ENCODE measurements at regions of chr16 and their contacts with region 1.

Region 1: DNA sequence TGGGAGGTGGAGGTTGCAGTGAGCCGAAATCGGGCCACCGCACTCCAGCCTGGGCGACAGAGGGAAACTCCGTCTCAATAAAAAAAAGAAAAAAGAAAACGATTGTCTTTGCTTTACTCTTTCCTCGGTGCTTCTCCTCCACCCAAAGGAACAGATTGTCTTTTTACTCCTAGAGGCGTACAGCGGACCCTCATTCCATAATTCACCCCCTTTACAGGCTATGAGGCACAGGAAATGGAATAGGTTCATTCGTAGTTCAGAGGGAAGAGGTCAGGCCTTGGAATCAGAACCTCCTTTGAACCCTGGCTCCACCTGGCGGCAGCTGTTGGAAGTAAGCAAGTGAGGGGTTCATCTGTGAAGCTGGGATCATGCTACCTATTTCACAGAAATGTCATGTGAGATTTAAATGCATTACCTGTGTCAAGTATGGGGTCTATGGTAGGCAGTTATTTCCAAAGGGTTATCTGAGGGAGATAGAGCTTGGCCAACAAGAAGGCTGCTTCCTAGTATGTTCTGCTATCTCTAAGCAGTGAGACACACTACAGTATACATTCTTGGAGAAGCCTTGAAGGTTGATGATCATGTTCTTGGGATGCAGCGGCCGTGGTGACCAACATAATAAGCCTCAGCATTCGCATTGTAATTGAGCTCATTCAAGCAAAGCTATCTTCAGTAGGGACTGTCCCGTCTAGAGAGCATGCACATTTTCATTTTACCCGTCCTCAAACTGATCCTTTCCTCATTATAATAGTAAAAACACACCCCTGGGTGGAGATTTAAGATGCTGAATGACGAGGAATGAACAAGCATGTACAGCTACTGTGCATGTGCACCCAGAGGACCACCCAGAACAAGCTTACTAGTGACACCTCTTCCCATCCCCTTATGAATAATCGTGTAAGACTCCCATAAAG is 18.7 kb upstream of the ZNF689 start:
- DNase-seq: peak; percentile 64 to 89 (median 80)
- ATAC-seq: peak; percentile 97
- H3K4me3 ChIP-seq: peak overlapping the region; percentile 51
- H3K4me3 Mint-ChIP-seq: peak overlapping the region; percentile 58 to 85 (median 72)
- H3K27ac ChIP-seq: peak overlapping the region; percentile 60
- H3K27ac Mint-ChIP-seq: peak overlapping the region in 8 of 9 donors; percentile 58 to 89 (median 80)
- H3K4me1 ChIP-seq: peaks cover 0 to 3% of the 10 kb centered on the region in 2 donors
- H3K4me1 Mint-ChIP-seq: peaks cover 4 to 12% (median 8%) of the 10 kb centered on the region in 7 donors
- H3K27me3 ChIP-seq: no peaks in the 10 kb centered on the region
- H3K27me3 Mint-ChIP-seq: peaks cover 0 to under 1% (median 0%) of the 10 kb centered on the region in 5 donors

Region 2: GRCh38 chr16:30041846-30042267 is 587.0 kb before region 1 on chr16:
- CTCF ChIA-PET with region 1: no interaction called
- POLR2A ChIA-PET with region 1: no interaction called
- intact Hi-C with region 1: loop called in 1 of 2 experiments (anchors 2 kb)
- DNase-seq: peak in 3 of 9 donors; percentile 40 to 44 (median 42)
- ATAC-seq: no peak
- H3K4me3 ChIP-seq: no peak overlapping the region
- H3K4me3 Mint-ChIP-seq: no peak overlapping the region
- H3K27ac ChIP-seq: no peak overlapping the region
- H3K27ac Mint-ChIP-seq: no peak overlapping the region
- H3K4me1 ChIP-seq: no peaks in the 10 kb centered on the region
- H3K4me1 Mint-ChIP-seq: peaks cover 0 to 7% (median 0%) of the 10 kb centered on the region in 7 donors
- H3K27me3 ChIP-seq: no peaks in the 10 kb centered on the region
- H3K27me3 Mint-ChIP-seq: peaks cover 0 to 21% (median 0%) of the 10 kb centered on the region in 5 donors

Region 3: DNA sequence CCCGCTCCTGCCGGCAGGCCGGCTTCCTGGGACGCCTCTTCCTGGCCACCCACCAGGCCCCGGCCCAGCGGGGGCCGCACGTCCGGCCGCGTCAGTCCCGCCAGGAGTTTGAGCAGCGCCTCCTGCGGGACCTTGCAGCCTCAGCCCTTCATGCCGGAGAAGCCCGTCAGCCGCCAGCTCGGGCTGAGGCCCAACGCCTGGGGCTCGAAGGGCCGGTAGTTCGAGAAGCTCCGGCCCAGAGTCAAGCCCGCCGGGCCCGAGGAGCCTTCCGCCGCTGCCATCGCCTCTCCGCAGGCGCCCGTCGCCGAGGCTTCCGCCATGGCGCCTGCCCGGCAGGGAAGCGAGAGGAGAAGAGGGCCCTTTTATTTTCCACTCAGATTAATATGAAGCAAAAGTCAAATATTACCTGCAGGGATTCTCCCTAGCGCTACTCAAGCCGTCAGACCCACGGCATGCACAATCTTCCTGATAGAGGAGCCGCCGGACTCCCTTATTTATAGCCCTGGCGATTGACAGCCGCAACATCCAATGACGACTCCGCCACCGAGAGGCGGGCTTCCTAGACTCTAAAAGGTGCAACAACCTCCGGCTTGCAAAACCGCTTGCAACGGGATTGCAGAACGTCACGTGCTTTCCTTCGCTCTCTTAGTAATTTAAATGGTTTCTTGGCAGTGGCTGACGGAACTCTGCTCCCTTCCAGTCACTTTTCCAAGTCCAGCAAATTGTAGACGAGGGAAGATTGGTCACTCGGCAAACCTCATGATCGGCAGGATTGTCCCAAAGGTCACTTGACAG is 183.3 kb before region 1 on chr16 and contains the start of gene SEPHS2:
- CTCF ChIA-PET with region 1: no interaction called
- POLR2A ChIA-PET with region 1: no interaction called
- intact Hi-C with region 1: loop called (anchors 1 to 5 kb)
- DNase-seq: peak; percentile 84 to 96 (median 94)
- ATAC-seq: peak; percentile 96
- H3K4me3 ChIP-seq: peak within 1 kb of the TSS; percentile 97
- H3K4me3 Mint-ChIP-seq: peak within 1 kb of the TSS; percentile 85 to 97 (median 95)
- H3K27ac ChIP-seq: peak within 1 kb of the TSS; percentile 92
- H3K27ac Mint-ChIP-seq: peak within 1 kb of the TSS; percentile 90 to 98 (median 96)
- H3K4me1 ChIP-seq: peaks cover 26 to 37% of the 10 kb centered on the region in 2 donors
- H3K4me1 Mint-ChIP-seq: peaks cover 30 to 47% (median 41%) of the 10 kb centered on the region in 7 donors
- H3K27me3 ChIP-seq: no peaks in the 10 kb centered on the region
- H3K27me3 Mint-ChIP-seq: no peaks in the 10 kb centered on the region
- total RNA-seq, gene SEPHS2: 20.9 to 69.6 (median 47.1) TPM

Region 4: GRCh38 chr16:30557957-30558788 is 70.7 kb before region 1 on chr16 and contains the start of gene ZNF764:
- CTCF ChIA-PET with region 1: no interaction called
- POLR2A ChIA-PET with region 1: interaction called, 5 read pairs
- intact Hi-C with region 1: loop called in 1 of 2 experiments (anchors 1 kb)
- DNase-seq: peak; percentile 79 to 95 (median 91)
- ATAC-seq: peak; percentile 95
- H3K4me3 ChIP-seq: peak within 1 kb of the TSS; percentile 92
- H3K4me3 Mint-ChIP-seq: peak within 1 kb of the TSS; percentile 83 to 92 (median 90)
- H3K27ac ChIP-seq: peak within 1 kb of the TSS; percentile 99
- H3K27ac Mint-ChIP-seq: peak within 1 kb of the TSS; percentile 87 to 94 (median 92)
- H3K4me1 ChIP-seq: peaks cover 12 to 15% of the 10 kb centered on the region in 2 donors
- H3K4me1 Mint-ChIP-seq: peaks cover 33 to 58% (median 43%) of the 10 kb centered on the region in 7 donors
- H3K27me3 ChIP-seq: no peaks in the 10 kb centered on the region
- H3K27me3 Mint-ChIP-seq: no peaks in the 10 kb centered on the region
- total RNA-seq, gene ZNF764: 11.9 to 20.9 (median 19.3) TPM

Region 5: DNA sequence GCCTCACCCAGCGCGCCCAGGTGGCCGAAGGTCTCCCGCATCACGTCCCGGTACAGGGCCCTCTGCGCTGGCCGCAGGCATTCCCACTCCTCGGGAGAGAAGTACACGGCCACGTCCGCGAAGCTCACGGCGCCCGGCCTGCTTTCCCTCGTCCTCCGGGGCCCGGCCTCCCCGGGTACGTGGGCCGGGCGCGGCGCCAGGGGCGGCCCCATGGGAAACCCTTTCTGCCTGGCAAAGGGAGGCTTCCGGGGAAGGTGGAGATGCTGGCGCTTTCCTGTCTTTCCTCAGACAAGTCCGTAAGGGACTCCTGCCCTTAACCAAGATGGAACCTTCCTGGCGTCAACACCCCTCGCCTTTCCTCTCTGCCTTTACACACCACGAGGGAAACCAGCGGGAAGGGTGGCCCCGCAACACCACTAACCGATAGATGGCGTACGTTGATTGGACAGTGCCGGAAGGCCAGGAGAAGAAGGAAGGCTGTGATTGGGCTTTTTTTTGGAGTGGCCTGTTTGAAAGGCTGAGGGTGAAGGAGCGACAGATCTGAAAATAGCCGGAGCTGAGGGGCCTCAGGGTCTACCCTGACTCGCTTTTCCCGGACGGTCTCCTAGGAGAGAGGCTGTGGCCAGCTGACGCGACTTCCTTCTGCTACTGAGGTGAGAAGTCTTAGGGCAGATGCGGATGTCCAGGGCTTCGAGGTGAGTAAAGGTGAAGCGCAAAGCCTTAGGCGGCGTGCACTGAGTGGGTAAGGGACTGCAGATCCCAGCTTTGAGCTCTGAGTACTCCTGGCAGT is 43.3 kb before region 1 on chr16 and contains the start of gene ZNF785:
- CTCF ChIA-PET with region 1: interaction called, 5 read pairs
- POLR2A ChIA-PET with region 1: interaction called, 4 read pairs
- intact Hi-C with region 1: loop called in 1 of 2 experiments (anchors 1 kb)
- DNase-seq: peak; percentile 72 to 95 (median 93)
- ATAC-seq: peak; percentile 100
- H3K4me3 ChIP-seq: peak within 1 kb of the TSS; percentile 77
- H3K4me3 Mint-ChIP-seq: peak within 1 kb of the TSS; percentile 85 to 98 (median 94)
- H3K27ac ChIP-seq: peak within 1 kb of the TSS; percentile 81
- H3K27ac Mint-ChIP-seq: peak within 1 kb of the TSS; percentile 89 to 95 (median 92)
- H3K4me1 ChIP-seq: peaks cover 8 to 12% of the 10 kb centered on the region in 2 donors
- H3K4me1 Mint-ChIP-seq: peaks cover 6 to 44% (median 32%) of the 10 kb centered on the region in 7 donors
- H3K27me3 ChIP-seq: no peaks in the 10 kb centered on the region
- H3K27me3 Mint-ChIP-seq: peaks cover 0 to 2% (median 0%) of the 10 kb centered on the region in 5 donors
- total RNA-seq, gene ZNF785: 10.2 to 37.1 (median 21.4) TPM

Region 6: GRCh38 chr16:30609926-30610839 is 18.7 kb before region 1 on chr16 and contains the start of gene ZNF689:
- CTCF ChIA-PET with region 1: interaction called, 6 read pairs
- POLR2A ChIA-PET with region 1: interaction called, 10 read pairs
- intact Hi-C with region 1: loop called (anchors 1 kb)
- DNase-seq: peak; percentile 90 to 98 (median 93)
- ATAC-seq: peak; percentile 96
- H3K4me3 ChIP-seq: peak within 1 kb of the TSS; percentile 98
- H3K4me3 Mint-ChIP-seq: peak within 1 kb of the TSS; percentile 89 to 97 (median 94)
- H3K27ac ChIP-seq: peak within 1 kb of the TSS; percentile 94
- H3K27ac Mint-ChIP-seq: peak within 1 kb of the TSS; percentile 94 to 99 (median 97)
- H3K4me1 ChIP-seq: peaks cover 8 to 11% of the 10 kb centered on the region in 2 donors
- H3K4me1 Mint-ChIP-seq: peaks cover 5 to 26% (median 22%) of the 10 kb centered on the region in 7 donors
- H3K27me3 ChIP-seq: no peaks in the 10 kb centered on the region
- H3K27me3 Mint-ChIP-seq: no peaks in the 10 kb centered on the region
- total RNA-seq, gene ZNF689: 6.8 to 14.6 (median 12.4) TPM

Region 7: GRCh38 chr16:30747799-30748634 is 119.1 kb after region 1 on chr16 and contains the start of gene PHKG2:
- CTCF ChIA-PET with region 1: no interaction called
- POLR2A ChIA-PET with region 1: no interaction called
- intact Hi-C with region 1: no loop called
- DNase-seq: peak; percentile 82 to 95 (median 92)
- ATAC-seq: peak; percentile 99
- H3K4me3 ChIP-seq: peak within 1 kb of the TSS; percentile 51
- H3K4me3 Mint-ChIP-seq: peak within 1 kb of the TSS; percentile 78 to 98 (median 90)
- H3K27ac ChIP-seq: peak within 1 kb of the TSS; percentile 75
- H3K27ac Mint-ChIP-seq: peak within 1 kb of the TSS; percentile 82 to 95 (median 90)
- H3K4me1 ChIP-seq: peaks cover 4 to 6% of the 10 kb centered on the region in 2 donors
- H3K4me1 Mint-ChIP-seq: peaks cover 18 to 29% (median 27%) of the 10 kb centered on the region in 7 donors
- H3K27me3 ChIP-seq: no peaks in the 10 kb centered on the region
- H3K27me3 Mint-ChIP-seq: no peaks in the 10 kb centered on the region
- total RNA-seq, gene PHKG2: 33.2 to 57.8 (median 46.7) TPM

Region 8: DNA sequence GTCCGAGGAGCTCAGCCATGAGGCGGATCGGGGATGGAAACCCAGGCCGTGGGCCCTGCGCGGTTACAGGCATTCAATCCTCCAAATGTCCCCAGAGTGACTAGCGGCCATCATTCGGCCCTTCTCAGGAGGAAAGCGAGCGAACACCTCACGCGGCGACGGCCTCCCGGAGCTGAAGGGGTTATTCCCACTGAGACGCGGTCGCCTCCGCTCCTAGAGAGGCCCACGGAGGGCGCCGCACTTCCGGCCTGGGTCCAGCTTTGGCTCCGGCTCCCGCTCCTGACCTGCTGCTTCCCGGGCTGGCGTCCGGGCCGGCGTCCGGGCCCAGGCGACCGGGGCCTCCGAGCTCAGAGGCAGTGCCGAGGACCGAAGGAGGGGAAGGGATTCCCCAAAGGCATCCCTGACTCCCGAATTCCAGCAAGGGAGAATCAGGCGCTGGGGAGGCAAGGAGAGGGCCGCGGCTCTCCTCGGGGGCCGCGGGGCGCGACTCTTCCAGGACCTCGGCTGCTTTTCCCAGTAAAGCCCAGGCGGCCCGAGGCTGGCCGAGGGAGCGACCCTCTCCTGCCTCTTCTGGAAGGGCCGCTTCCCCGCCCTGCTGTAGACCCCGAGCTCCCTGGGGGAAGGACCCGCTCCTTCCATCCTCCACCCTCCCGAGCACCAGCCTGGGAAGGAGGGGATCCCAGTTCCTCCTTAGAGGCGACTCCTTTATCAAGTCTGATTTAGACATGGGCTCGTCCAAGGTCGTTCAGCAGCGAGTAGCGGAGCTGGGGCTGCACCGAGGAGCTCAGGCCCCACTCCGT is 176.7 kb after region 1 on chr16:
- CTCF ChIA-PET with region 1: no interaction called
- POLR2A ChIA-PET with region 1: no interaction called
- intact Hi-C with region 1: no loop called
- DNase-seq: peak; percentile 32 to 63 (median 52)
- ATAC-seq: peak; percentile 92
- H3K4me3 ChIP-seq: peak overlapping the region; percentile 86
- H3K4me3 Mint-ChIP-seq: peak overlapping the region; percentile 79 to 99 (median 90)
- H3K27ac ChIP-seq: peak overlapping the region; percentile 76
- H3K27ac Mint-ChIP-seq: peak overlapping the region in 8 of 9 donors; percentile 61 to 94 (median 82)
- H3K4me1 ChIP-seq: peaks cover 7 to 10% of the 10 kb centered on the region in 2 donors
- H3K4me1 Mint-ChIP-seq: peaks cover 14 to 31% (median 22%) of the 10 kb centered on the region in 7 donors
- H3K27me3 ChIP-seq: no peaks in the 10 kb centered on the region
- H3K27me3 Mint-ChIP-seq: peaks cover 0 to 24% (median 0%) of the 10 kb centered on the region in 5 donors